Breast epithelium (tissue), 4 donors: ENCODE measurements at regions of chr3 and their contacts with region 1.

Region 1: GRCh38 chr3:37601832-37602231 is 259.8 kb upstream of the CTDSPL start:
- DNase-seq: no peak
- H3K4me3 ChIP-seq: no peak overlapping the region
- H3K27ac ChIP-seq: no peak overlapping the region
- H3K4me1 ChIP-seq: no peaks in the 10 kb centered on the region
- H3K27me3 ChIP-seq: no peaks in the 10 kb centered on the region
- CTCF ChIP-seq: no peak
- POLR2A ChIP-seq: no peak

Region 2: GRCh38 chr3:37537914-37538691 is 63.7 kb before region 1 on chr3:
- intact Hi-C with region 1: loop called (anchors 2 kb)
- DNase-seq: no peak
- H3K4me3 ChIP-seq: no peak overlapping the region
- H3K27ac ChIP-seq: peak overlapping the region in 1 of 2 donors; percentile 76
- H3K4me1 ChIP-seq: peaks cover 0 to 3% of the 10 kb centered on the region in 2 donors
- H3K27me3 ChIP-seq: no peaks in the 10 kb centered on the region
- CTCF ChIP-seq: no peak
- POLR2A ChIP-seq: no peak

Region 3: DNA sequence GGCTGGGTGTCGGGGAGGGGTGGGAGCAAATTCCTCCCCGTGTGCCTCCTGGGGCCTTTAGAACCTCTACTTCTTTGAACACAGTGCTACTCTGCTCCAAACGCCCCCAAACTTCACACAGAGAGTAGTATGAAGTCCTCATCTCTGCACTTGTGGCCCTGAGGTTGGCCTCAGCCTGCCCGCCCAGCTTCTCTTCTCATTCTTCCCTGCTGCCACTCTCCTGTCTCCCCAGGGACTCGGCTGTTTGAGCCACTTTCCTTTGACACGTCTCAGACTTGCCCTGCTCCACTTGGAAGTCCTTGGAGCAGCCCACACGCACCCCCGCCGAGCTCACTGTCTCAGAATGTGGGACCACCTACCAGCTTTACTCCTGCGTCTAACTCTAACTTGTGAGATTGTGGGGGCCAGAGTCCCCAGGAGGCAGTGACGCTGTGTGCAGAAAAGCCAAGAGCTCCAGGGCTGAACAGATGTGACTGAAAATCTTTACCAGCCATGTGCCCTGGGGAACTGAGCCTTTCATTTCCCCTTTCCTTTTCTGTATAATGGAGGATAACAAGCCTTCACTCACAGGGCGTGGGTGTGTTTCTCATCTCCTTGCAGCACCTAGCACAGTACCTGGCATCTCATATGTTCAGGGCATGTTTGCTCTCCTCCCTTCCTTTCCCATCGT is 26.3 kb after region 1 on chr3:
- intact Hi-C with region 1: no loop called
- DNase-seq: no peak
- H3K4me3 ChIP-seq: no peak overlapping the region
- H3K27ac ChIP-seq: peak overlapping the region in 1 of 2 donors; percentile 38
- H3K4me1 ChIP-seq: no peaks in the 10 kb centered on the region
- H3K27me3 ChIP-seq: no peaks in the 10 kb centered on the region
- CTCF ChIP-seq: no peak
- POLR2A ChIP-seq: no peak